Activated CD4-positive, alpha-beta memory T cell treated with anti-CD3 and anti-CD28 coated beads for 36 hours (primary cell): ENCODE measurements at regions of chr12 and their contacts with region 1.

Region 1: DNA sequence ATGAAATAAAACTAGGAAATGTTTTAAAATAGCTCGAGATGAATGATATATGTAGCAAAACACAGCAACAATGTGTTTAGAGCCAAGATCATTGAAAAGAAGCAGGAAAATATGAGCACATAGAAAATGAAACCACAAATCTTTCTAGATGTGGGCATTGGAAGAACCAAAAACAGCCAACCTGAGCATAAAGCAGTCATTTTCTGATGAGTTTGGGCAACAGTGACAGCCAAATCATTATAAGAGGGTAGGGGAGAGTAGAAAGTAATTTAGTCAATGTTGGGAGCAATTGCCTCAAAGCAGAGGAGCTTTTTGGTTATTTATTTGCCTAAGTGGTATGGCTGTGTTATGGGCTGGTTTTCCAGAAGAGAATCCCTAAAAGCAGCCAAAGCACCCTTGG is 8.8 kb upstream of the BICDL1 start:
- DNase-seq: no peak
- H3K4me3 Mint-ChIP-seq: peak overlapping the region; percentile 53
- H3K27ac Mint-ChIP-seq: peak overlapping the region; percentile 82
- H3K4me1 Mint-ChIP-seq: peaks cover 20% of the 10 kb centered on the region
- H3K27me3 Mint-ChIP-seq: peaks cover 2% of the 10 kb centered on the region

Region 2: GRCh38 chr12:119959435-119959834 is 20.8 kb before region 1 on chr12:
- CTCF ChIA-PET with region 1: no interaction called
- POLR2A ChIA-PET with region 1: no interaction called
- intact Hi-C with region 1: no loop called
- DNase-seq: no peak
- H3K4me3 Mint-ChIP-seq: no peak overlapping the region
- H3K27ac Mint-ChIP-seq: no peak overlapping the region
- H3K4me1 Mint-ChIP-seq: peaks cover 4% of the 10 kb centered on the region
- H3K27me3 Mint-ChIP-seq: no peaks in the 10 kb centered on the region

Region 3: GRCh38 chr12:120006209-120006975 is 26.1 kb after region 1 on chr12:
- CTCF ChIA-PET with region 1: no interaction called
- POLR2A ChIA-PET with region 1: interaction called, 19 read pairs
- intact Hi-C with region 1: loop called (anchors 1 kb)
- DNase-seq: peak; percentile 71
- H3K4me3 Mint-ChIP-seq: peak overlapping the region; percentile 53
- H3K27ac Mint-ChIP-seq: peak overlapping the region; percentile 96
- H3K4me1 Mint-ChIP-seq: peaks cover 70% of the 10 kb centered on the region
- H3K27me3 Mint-ChIP-seq: no peaks in the 10 kb centered on the region